ENCODE measurements at regions of chr6 and their contacts with region 1.

Region 1: GRCh38 chr6:3742426-3743344 is 8.8 kb downstream of the PXDC1 start:
- DNase-seq: peak; percentile 94
- H3K4me3 ChIP-seq: peak overlapping the region in 3 of 4 donors; percentile 6 to 28 (median 21)
- H3K27ac ChIP-seq: peak overlapping the region; percentile 43 to 86 (median 79)
- H3K4me1 ChIP-seq: peaks cover 71 to 94% (median 80%) of the 10 kb centered on the region in 4 donors
- H3K27me3 ChIP-seq: no peaks in the 10 kb centered on the region
- CTCF ChIP-seq: peak in 6 of 7 experiments; percentile 88 to 98 (median 94)
- EP300 ChIP-seq: no peak
- POLR2A ChIP-seq: no peak

Region 2: GRCh38 chr6:3825851-3826581 is 83.3 kb after region 1 on chr6:
- intact Hi-C with region 1: loop called (anchors 10 kb)
- DNase-seq: peak; percentile 92 to 95
- H3K4me3 ChIP-seq: peak overlapping the region in 2 of 4 donors; percentile 8 to 22
- H3K27ac ChIP-seq: peak overlapping the region; percentile 91 to 97 (median 92)
- H3K4me1 ChIP-seq: peaks cover 28 to 56% (median 41%) of the 10 kb centered on the region in 4 donors
- H3K27me3 ChIP-seq: no peaks in the 10 kb centered on the region
- CTCF ChIP-seq: no peak
- EP300 ChIP-seq: peak; percentile 8
- POLR2A ChIP-seq: no peak

Region 3: GRCh38 chr6:3887150-3887700 is 144.5 kb after region 1 on chr6:
- intact Hi-C with region 1: loop called (anchors 5 kb)
- DNase-seq: peak in 1 of 2 donors; percentile 63
- H3K4me3 ChIP-seq: no peak overlapping the region
- H3K27ac ChIP-seq: peak overlapping the region in 2 of 5 donors; percentile 55 to 62
- H3K4me1 ChIP-seq: peaks cover 5 to 20% (median 8%) of the 10 kb centered on the region in 4 donors
- H3K27me3 ChIP-seq: no peaks in the 10 kb centered on the region
- CTCF ChIP-seq: peak in 3 of 7 experiments; percentile 19 to 45 (median 39)
- EP300 ChIP-seq: no peak
- POLR2A ChIP-seq: no peak

Region 4: GRCh38 chr6:3990692-3991501 is 248.2 kb after region 1 on chr6:
- intact Hi-C with region 1: loop called (anchors 5 kb)
- DNase-seq: peak; percentile 88 to 96
- H3K4me3 ChIP-seq: peak overlapping the region; percentile 38 to 42 (median 39)
- H3K27ac ChIP-seq: peak overlapping the region; percentile 21 to 84 (median 71)
- H3K4me1 ChIP-seq: peaks cover 10 to 33% (median 22%) of the 10 kb centered on the region in 4 donors
- H3K27me3 ChIP-seq: no peaks in the 10 kb centered on the region
- CTCF ChIP-seq: peak in 5 of 7 experiments; percentile 68 to 87 (median 73)
- EP300 ChIP-seq: no peak
- POLR2A ChIP-seq: no peak